Common myeloid progenitor, CD34-positive (primary cell): ENCODE measurements at regions of chr5 and their contacts with region 1.

Region 1: GRCh38 chr5:39547553-39548154 is 122.9 kb upstream of the DAB2 start:
- DNase-seq: peak; percentile 56 to 69 (median 61)
- H3K4me3 ChIP-seq: peak overlapping the region in 1 of 7 experiments; percentile 51
- H3K27ac ChIP-seq: no peak overlapping the region
- H3K4me1 ChIP-seq: peaks cover 9 to 17% (median 11%) of the 10 kb centered on the region in 4 experiments
- H3K27me3 ChIP-seq: no peaks in the 10 kb centered on the region

Region 2: GRCh38 chr5:39283231-39283818 is 264.3 kb before region 1 on chr5:
- CTCF ChIA-PET with region 1: interaction called, 10 read pairs
- POLR2A ChIA-PET with region 1: no interaction called
- DNase-seq: peak; percentile 79 to 88 (median 80)
- H3K4me3 ChIP-seq: no peak overlapping the region
- H3K27ac ChIP-seq: no peak overlapping the region
- H3K4me1 ChIP-seq: no peaks in the 10 kb centered on the region
- H3K27me3 ChIP-seq: no peaks in the 10 kb centered on the region

Region 3: DNA sequence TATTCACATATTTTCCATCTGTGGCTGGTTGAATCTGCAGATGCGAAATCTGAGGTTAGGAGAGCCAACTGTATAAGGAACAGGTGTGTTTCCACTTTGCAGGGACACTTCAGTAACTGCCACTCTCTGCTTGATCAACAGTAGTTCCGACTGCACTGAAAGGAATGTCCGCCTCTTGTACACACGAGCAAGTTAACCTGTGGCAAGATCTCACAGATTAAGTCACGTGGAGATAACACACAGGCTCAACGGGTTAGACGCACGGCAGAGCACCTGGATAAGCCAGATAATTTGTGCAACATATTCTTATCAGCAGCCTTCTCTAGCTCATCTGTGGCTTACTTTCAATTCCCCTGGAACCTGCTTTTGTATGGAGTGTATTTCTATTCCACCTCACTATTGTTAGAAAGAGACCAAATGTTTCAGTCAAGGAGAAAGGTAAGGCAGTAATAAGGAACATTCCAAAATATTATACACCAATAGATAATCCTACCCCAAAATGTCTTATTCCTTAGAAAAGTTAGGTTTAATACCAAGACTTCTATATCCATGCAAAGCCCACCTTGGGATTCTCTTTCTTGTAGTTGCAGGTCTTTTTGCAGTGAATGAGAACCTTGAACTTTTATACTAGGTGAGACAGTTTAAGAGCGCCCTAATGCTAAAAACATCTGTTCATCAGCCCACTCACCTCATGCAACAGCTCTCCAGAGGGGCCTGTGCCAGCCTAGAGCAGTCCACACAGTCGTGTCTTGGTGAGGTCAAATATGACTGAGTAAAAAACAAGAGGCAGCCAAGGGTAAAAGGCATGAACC is 176.9 kb before region 1 on chr5:
- CTCF ChIA-PET with region 1: interaction called, 187 read pairs
- POLR2A ChIA-PET with region 1: no interaction called
- DNase-seq: no peak
- H3K4me3 ChIP-seq: no peak overlapping the region
- H3K27ac ChIP-seq: no peak overlapping the region
- H3K4me1 ChIP-seq: no peaks in the 10 kb centered on the region
- H3K27me3 ChIP-seq: no peaks in the 10 kb centered on the region

Region 4: GRCh38 chr5:39376293-39376714 is 171.3 kb before region 1 on chr5:
- CTCF ChIA-PET with region 1: interaction called, 187 read pairs
- POLR2A ChIA-PET with region 1: interaction called, 4 read pairs
- DNase-seq: peak; percentile 62 to 81 (median 73)
- H3K4me3 ChIP-seq: no peak overlapping the region
- H3K27ac ChIP-seq: no peak overlapping the region
- H3K4me1 ChIP-seq: no peaks in the 10 kb centered on the region
- H3K27me3 ChIP-seq: no peaks in the 10 kb centered on the region

Region 5: DNA sequence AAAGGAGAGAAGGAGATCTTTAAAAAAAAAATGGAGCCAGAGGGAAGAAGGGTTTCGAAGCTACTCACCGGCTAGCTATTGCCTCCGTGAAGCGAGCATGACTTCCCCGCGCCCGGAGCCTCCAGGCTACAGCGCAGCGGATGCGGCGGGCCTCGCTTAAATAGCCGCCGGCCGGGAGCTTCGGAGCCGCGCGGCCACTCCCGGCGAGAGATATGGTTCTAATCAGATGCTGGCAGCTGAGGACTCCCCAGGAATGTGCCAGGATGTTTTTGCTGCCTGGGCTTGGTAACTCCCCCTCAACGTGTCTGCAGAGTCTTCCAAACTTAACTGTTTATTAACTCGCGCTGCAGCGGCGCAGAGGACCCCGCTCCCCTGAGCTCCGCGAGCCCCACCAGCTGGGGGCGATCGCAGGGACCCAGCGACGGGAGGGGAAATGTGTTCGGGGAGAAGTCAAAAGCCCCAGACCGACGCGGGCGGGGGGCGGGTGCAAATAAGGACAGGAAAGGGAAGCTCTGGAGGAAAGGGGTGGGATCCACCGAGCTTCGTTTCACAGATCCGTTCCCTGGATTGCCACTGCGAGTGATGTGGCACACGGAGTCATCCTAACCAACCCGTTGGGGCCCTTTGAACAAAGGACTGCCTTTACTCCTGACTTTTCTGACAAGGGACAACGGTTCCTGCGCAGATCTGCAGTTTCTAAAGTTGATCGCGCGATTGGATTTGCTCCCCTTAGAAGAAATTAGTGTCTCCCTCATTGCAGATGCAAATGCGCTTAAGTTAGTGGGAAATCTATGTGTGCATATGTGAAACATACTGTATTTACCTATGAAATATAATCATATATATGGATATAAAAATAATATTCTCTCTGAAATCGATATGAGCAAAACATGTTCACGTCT is 122.7 kb before region 1 on chr5 and contains the start of gene DAB2:
- CTCF ChIA-PET with region 1: interaction called, 27 read pairs
- POLR2A ChIA-PET with region 1: interaction called, 6 read pairs
- DNase-seq: peak; percentile 91 to 94 (median 93)
- H3K4me3 ChIP-seq: peak within 1 kb of the TSS; percentile 63 to 91 (median 80)
- H3K27ac ChIP-seq: peak within 1 kb of the TSS in 1 of 2 experiments; percentile 63
- H3K4me1 ChIP-seq: peaks cover 0 to 49% (median 31%) of the 10 kb centered on the region in 4 experiments
- H3K27me3 ChIP-seq: no peaks in the 10 kb centered on the region

Region 6: DNA sequence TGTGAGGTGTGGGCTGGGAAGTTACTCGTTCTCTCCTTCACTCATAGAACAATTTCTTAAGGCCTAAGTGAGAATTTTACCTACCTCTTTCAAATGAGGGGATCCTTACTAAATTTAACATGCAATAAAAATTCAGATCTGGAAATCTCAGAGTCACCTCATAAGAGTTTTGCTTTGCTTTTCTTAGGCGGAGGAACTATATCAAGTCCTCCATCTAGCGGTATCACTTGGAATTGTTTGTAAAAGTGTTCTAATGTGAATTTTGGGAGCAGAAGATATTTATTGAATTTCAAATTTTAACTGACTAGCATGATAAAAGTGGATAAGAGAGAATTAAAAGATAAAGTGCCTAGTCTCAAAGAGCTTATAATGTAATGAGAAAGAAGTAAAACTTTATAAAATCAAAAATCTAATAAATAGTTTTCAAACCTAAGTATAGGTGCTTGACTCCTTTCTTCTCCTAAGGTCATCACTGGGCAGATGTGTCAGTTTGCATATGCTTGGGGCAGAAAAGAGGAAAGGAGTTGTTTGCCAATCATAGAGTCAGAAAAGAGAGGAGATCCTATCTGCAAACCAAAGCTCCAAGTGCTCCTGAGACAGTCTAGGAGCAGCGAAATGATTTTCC is 22.9 kb after region 1 on chr5:
- CTCF ChIA-PET with region 1: interaction called, 11 read pairs
- POLR2A ChIA-PET with region 1: no interaction called
- DNase-seq: peak; percentile 30 to 65 (median 59)
- H3K4me3 ChIP-seq: no peak overlapping the region
- H3K27ac ChIP-seq: no peak overlapping the region
- H3K4me1 ChIP-seq: no peaks in the 10 kb centered on the region
- H3K27me3 ChIP-seq: no peaks in the 10 kb centered on the region